ENCODE measurements at regions of chr11 and their contacts with region 1.

Region 1: GRCh38 chr11:32435511-32435941 is at the start of gene WT1:
- DNase-seq: no peak
- ATAC-seq: no peak
- H3K4me3 Mint-ChIP-seq: peak within 1 kb of the TSS; percentile 32
- H3K27ac Mint-ChIP-seq: no peak within 1 kb of the TSS
- H3K4me1 Mint-ChIP-seq: peaks cover 31% of the 10 kb centered on the region
- H3K27me3 Mint-ChIP-seq: peaks cover 80% of the 10 kb centered on the region
- CTCF ChIP-seq: no peak
- total RNA-seq, gene WT1: not detected

Region 2: GRCh38 chr11:31702966-31703365 is 732.6 kb before region 1 on chr11:
- CTCF ChIA-PET with region 1: no interaction called
- POLR2A ChIA-PET with region 1: no interaction called
- intact Hi-C with region 1: loop called (anchors 10 kb)
- DNase-seq: no peak
- ATAC-seq: no peak
- H3K4me3 Mint-ChIP-seq: no peak overlapping the region
- H3K27ac Mint-ChIP-seq: no peak overlapping the region
- H3K4me1 Mint-ChIP-seq: no peaks in the 10 kb centered on the region
- H3K27me3 Mint-ChIP-seq: no peaks in the 10 kb centered on the region
- CTCF ChIP-seq: no peak

Region 3: DNA sequence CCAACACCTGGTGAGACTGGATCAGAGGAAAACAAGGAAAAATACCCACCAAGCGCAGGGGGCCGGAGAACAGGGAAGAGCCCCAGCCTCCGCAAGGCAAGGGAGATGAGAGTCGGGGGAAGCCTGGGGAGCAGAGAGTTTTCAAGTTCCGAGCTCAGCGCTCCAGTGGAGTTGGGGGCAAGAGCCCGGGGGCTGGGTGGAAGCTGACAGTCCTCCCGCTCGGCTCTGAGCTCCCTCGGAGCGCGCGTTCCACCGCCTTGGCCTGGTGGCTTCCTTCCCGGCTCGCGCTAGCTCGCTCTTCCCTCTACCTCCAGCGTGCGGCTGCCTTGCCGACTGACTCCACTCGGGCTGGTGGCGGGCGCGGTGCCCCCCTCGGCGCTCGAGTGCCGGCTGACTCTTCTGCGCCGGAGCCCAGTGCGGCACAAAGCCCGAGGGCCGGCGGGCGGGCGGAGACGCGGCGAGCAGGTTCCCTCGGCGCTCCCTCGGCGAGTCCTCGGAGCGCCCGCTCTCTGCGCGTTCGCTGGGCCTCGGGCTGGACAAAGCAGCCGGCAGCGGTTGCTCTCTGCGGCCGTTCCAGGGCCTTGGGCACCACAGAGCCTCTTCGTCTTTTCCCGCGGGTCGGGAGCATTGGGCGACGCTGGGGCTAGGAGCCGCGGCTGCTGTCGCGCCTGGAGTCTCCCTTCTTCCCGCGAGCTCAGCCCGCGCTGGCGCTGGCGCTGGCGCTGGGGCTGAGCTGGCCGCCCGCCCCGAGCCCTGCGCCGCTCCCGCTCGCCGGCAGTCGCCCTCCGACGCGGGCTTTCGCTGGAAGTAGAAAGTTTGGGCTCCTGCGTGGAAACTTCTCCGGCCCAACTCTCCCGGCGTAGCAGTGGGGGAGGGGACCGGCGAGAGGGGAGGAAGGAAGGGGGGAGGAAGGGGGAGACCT is 625.4 kb before region 1 on chr11:
- CTCF ChIA-PET with region 1: no interaction called
- POLR2A ChIA-PET with region 1: no interaction called
- intact Hi-C with region 1: loop called (anchors 5 kb)
- DNase-seq: no peak
- ATAC-seq: no peak
- H3K4me3 Mint-ChIP-seq: peak overlapping the region; percentile 61
- H3K27ac Mint-ChIP-seq: no peak overlapping the region
- H3K4me1 Mint-ChIP-seq: peaks cover 44% of the 10 kb centered on the region
- H3K27me3 Mint-ChIP-seq: peaks cover 79% of the 10 kb centered on the region
- CTCF ChIP-seq: no peak

Region 4: GRCh38 chr11:32487270-32487669 is 51.7 kb after region 1 on chr11:
- CTCF ChIA-PET with region 1: no interaction called
- POLR2A ChIA-PET with region 1: no interaction called
- intact Hi-C with region 1: no loop called
- DNase-seq: no peak
- ATAC-seq: no peak
- H3K4me3 Mint-ChIP-seq: no peak overlapping the region
- H3K27ac Mint-ChIP-seq: no peak overlapping the region
- H3K4me1 Mint-ChIP-seq: no peaks in the 10 kb centered on the region
- H3K27me3 Mint-ChIP-seq: no peaks in the 10 kb centered on the region
- CTCF ChIP-seq: no peak

Region 5: DNA sequence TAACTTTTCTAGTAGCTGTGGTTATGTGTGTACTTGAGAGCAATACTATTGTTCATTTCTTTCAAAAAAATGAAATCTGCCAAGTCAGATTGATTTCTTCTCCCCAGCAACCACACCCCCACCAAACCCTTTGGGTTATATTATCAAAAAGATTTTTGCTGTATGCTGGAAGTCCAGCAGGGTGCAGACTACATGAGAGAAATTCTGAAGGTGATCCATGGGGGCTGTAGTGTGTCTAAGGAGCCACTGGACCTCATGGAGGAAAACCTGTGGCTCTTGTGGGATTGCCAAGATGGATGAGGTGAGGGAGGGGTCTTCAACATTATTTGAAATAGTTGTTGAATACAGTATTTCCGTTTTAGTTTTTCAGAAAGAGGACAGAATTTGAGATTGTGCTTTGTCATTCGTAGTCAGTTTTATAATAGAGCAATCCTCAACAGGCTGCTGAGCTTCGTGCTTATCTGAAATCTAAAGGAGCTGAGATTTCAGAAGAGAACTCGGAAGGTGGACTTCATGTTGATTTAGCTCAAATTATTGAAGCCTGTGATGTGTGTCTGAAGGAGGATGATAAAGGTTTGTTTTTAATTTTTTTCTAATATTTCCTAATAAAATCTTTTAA is 151.2 kb after region 1 on chr11:
- CTCF ChIA-PET with region 1: no interaction called
- POLR2A ChIA-PET with region 1: no interaction called
- intact Hi-C with region 1: no loop called
- DNase-seq: peak; percentile 21
- ATAC-seq: no peak
- H3K4me3 Mint-ChIP-seq: peak overlapping the region; percentile 90
- H3K27ac Mint-ChIP-seq: peak overlapping the region; percentile 58
- H3K4me1 Mint-ChIP-seq: peaks cover 41% of the 10 kb centered on the region
- H3K27me3 Mint-ChIP-seq: no peaks in the 10 kb centered on the region
- CTCF ChIP-seq: peak; percentile 45

Measured in activated CD8-positive, alpha-beta T cell treated with anti-CD3 and anti-CD28 coated beads for 36 hours (primary cell).